ENCODE measurements at regions of chr16 and their contacts with region 1.

Region 1: DNA sequence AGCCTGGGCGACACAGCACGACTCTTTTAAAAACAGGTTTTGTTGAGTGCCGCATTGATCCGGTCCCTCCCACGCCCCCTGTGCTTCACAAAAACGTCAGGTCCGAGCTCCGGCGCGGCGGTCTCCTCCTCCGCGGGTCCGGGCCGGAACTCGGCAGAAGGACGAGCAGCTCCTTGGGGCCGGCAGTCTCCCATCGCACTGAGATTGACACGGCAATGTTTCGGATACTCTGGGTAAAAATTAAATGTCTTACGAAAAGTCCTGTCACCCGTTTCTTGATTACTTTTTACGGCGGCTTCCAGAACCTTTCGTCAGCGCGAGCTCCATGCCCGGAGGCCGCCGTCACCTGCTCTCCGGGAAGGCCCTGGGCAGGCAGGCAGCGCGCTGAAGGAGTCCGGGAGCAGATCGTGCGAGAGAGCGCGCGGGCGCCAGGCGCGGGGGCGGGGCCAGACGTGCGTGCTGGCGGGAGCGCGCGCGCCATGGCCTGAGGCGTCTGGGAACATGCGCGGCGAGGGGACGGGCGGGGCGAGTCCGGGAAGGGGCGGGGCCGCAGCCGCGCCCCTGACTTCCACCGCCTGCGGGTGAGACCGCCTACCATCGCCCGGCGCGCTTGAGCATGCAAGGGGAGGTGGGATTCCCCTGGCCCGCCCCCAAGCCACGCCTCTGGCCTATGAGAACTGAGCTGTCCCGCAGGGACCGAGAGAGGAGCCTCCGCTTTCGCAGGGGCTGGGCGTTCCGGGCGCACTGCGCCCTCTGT is 11.7 kb upstream of the SRL start:
- DNase-seq: peak; percentile 99
- CTCF ChIP-seq: no peak

Region 2: GRCh38 chr16:4194661-4195060 is 58.9 kb before region 1 on chr16:
- CTCF ChIA-PET with region 1: interaction called, 11 read pairs
- POLR2A ChIA-PET with region 1: no interaction called
- DNase-seq: no peak
- CTCF ChIP-seq: no peak

Region 3: DNA sequence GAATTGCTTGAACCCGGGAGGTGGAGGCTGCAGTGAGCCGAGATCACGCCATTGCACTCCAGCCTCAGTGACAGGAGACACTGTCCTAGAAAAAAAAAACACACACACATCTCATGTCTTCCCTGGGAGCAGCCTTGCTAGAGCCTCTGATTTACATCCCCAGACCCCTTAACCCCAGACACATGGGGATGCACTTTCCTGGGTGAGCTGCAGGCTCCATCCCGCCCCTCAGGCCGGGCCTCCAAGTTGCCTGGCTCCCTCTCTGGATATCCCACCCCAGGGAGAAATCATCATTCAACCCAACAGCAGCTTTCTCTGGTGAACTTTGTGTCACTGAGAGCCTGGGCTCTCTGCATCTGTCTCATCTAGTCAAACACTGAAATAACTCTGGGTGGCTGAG is 33.2 kb before region 1 on chr16:
- CTCF ChIA-PET with region 1: interaction called, 16 read pairs
- POLR2A ChIA-PET with region 1: no interaction called
- DNase-seq: no peak
- CTCF ChIP-seq: no peak

Region 4: GRCh38 chr16:4271176-4272066 is 17.8 kb after region 1 on chr16:
- CTCF ChIA-PET with region 1: interaction called, 103 read pairs
- POLR2A ChIA-PET with region 1: interaction called, 8 read pairs
- DNase-seq: peak; percentile 93
- CTCF ChIP-seq: peak; percentile 20

Region 5: GRCh38 chr16:4330277-4330874 is 76.8 kb after region 1 on chr16:
- CTCF ChIA-PET with region 1: interaction called, 18 read pairs
- POLR2A ChIA-PET with region 1: no interaction called
- DNase-seq: peak; percentile 89
- CTCF ChIP-seq: peak; percentile 95

Measured in GM10248 (cell line).